HEK293T (cell line): ENCODE measurements at regions of chr6 and their contacts with region 1.

Region 1: DNA sequence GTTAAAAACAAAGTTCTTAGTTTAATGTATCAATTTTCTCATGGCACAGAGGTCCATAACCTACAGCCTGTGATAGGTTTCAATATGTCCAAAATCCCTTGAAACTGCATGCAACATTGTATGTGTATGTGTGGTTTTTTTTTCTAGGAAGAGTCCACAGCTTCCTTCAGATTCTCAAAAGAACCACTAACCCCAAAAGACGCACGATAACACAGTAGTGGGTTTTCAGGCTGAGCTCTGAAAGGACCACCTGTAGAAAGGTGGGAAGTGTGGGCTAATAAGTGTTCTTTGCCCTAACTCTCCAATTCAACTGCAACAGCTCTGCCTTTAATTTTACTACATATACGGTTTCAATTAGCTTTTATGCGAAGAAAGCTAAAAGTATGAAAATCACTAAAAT is 11.5 kb upstream of the KATNA1 start:
- DNase-seq: no peak

Region 2: DNA sequence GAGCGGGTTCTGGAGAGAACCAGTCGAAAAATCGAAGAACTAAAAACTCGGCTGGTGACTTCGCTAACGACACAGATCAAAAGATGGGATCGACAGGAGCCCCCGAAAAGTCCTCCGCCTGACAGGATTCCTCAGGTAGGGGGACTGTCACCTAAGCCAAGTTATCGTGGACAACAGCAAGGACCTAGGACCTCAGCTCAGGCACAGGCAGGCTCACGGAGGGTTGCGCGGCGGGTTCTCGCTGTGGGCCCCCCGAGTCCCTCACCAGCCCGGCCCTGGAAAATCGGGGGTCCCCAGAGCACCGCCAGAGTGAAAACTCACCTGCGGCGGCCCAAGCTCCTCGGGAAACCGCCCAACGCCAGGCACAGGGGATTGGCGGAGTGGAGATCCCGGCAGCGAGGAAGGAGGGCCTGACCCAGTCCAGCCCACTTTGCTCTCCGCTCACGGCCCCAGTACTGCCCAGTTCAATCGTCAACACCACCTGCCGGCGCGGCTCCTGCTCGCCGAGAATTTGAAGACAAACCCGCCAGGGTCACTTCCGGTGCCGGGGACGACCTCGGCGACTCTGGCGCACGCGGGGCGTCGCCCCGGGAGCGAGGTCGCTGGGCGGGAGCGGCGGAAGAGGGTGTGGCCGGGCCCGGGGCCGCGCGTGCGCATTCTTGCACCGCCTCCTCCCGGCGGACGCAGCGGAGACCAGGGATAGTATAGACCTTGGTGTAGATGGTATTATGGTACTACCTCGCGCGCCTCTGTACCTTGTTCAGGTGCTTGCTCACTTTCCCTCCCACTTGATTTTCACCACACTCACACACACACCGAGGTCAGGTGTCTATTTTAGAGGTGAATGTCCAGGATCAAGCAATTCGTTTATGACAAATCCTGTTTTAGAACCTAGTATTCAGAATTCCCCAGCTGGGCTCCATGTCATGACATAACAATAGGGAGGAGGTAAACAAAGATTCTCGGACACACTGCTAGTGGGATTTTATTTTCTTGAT is 11.6 kb before region 1 on chr6 and contains the start of gene KATNA1:
- CTCF ChIA-PET with region 1: no interaction called
- POLR2A ChIA-PET with region 1: interaction called, 14 read pairs
- DNase-seq: peak; percentile 98

Region 3: DNA sequence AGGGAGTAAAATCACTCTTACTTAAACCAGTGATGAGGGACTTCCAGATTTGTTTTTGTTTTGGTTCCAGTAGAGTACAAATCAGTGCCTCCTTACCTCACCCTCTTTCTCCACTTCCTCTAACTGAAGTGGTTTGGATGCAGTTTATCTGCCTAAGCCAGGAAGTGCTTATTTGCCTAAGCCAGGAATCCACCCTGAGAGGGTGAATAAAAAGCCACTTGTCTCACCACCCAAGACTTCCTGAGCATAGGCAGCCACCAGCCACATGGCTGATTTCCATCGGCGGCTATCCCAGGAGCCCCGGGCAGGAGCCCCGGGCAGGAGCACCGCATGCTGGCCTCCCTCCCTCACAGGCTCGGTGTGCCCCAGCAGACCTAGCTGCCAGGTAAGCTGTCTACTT is 192.2 kb after region 1 on chr6:
- CTCF ChIA-PET with region 1: no interaction called
- POLR2A ChIA-PET with region 1: no interaction called
- DNase-seq: no peak